ENCODE measurements at regions of chr18 and their contacts with region 1.

Region 1: DNA sequence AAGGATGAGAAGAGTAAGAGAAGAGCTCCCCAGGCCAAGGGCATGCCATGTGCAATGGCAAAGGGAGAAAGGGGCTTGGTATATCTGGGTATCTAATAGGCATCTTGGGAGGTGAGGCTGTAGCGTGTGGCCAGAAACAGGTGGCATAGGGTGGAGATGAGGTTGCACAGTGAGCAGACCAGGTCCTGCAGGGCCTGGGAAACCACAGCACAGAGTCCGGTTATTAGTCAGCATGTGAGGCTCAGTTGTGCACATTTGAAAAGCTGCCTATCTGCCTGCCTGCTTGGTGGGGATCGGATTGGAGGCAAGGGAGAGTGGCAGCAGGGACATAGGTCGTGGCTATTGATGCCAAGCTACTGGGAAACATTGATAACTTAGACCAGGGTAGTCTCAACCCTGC is 190.6 kb downstream of the TPGS2 start:
- DNase-seq: no peak

Region 2: DNA sequence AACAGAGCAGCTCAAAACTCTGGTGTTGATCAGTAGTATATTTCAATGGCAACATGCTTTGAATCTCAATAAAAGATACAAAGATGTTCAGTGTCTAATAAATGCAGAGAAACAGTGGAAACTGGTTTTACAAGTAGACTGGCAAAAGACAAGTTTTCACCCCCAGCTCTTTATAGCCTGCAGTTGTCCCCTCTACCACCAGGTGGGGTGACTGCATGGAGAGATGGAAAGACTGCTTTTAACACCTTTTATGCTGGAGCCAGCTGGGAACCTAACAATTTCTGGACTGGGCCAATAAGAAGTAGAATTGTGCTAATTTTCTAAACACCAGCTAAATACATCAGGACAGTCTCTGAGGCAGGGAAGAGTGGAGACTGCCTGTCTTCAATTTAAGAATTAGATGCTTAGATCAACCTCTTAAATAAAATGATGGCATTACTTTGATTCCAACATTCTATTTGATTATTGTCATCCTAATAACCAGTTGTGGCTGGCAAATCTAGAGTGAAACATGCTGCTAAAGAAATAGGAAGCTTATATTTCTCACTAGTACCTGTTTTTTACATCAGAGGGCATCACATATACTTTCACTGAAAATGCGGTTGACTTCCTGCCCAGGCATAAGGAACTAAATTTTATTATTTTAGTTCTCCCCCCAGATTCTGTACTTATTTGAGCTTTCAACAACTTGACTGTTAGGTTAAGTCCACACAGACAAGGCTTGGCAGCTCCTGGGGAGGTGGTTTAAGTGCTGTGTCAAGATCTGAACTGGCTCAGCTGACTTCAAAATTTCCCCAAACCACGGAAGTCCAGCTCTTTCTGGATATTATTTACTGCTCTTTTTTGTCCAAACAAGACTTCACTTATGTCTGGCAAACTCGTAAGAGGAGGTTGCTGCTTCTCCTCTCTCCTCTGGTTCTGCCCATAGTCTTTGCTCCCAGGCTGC is 50.1 kb after region 1 on chr18:
- intact Hi-C with region 1: no loop called
- DNase-seq: no peak

Region 3: DNA sequence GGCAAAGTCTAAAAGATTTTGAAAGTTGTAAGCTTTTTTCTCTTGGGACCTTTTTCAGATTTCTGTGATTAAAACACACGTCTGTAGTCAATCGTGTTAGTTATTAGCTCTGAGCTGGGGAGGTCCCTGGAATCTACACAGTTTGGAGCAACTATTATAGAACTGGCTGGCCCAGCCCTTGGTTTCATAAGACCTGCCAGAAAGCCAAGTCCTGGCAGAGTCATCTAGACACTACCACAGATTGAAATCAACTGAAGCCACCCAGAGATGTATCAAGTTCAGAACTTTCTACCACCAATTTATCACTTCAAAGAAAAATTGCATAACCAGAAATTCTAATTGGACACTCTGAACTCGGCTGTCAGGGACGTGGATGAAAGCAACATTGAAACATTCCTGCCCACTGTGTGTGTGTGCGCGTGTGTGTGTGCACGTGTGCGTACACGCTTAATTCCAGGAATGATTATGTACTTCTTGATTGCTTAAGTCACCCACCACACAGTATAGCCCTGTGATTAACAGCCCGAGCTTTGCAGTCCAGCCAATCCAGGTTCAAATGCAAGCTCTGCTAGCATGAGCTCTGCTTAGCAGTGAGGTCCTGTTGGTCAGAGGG is 64.3 kb after region 1 on chr18:
- intact Hi-C with region 1: loop called in 1 of 2 experiments (anchors 5 kb)
- DNase-seq: no peak